ENCODE measurements at regions of chr3 and their contacts with region 1.

Region 1: DNA sequence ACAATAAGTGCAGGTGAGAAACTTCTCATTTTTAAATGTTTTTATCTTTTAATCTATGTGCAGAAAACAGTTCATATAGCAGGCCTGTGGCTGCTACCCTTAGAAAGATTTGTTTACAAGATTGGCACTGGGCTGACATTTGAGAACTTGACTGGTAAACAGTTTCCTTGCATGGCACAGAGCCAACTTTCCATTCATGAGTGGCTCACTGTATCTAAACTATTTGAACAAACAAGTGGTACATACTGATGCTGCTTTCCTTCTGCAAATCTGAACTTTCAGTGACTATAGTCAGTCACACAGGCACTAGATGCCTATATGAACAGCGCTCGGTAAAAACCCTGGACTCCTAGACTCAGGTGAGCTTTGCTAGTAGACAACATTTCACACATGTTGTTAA is 6.3 kb upstream of the GTPBP8 start:
- DNase-seq: no peak
- ATAC-seq: peak in 1 of 4 donors; percentile 20
- H3K4me3 ChIP-seq: no peak overlapping the region
- H3K27ac ChIP-seq: no peak overlapping the region
- H3K4me1 ChIP-seq: no peaks in the 10 kb centered on the region
- H3K27me3 ChIP-seq: no peaks in the 10 kb centered on the region
- CTCF ChIP-seq: no peak
- POLR2A ChIP-seq: no peak

Region 2: GRCh38 chr3:112642912-112643506 is 341.5 kb before region 1 on chr3:
- intact Hi-C with region 1: loop called (anchors 10 kb)
- DNase-seq: peak; percentile 72 to 78 (median 78)
- ATAC-seq: peak; percentile 94 to 96 (median 96)
- H3K4me3 ChIP-seq: no peak overlapping the region
- H3K27ac ChIP-seq: no peak overlapping the region
- H3K4me1 ChIP-seq: no peaks in the 10 kb centered on the region
- H3K27me3 ChIP-seq: no peaks in the 10 kb centered on the region
- CTCF ChIP-seq: peak; percentile 54 to 79 (median 71)
- POLR2A ChIP-seq: no peak

Region 3: GRCh38 chr3:112751564-112752512 is 232.6 kb before region 1 on chr3:
- intact Hi-C with region 1: no loop called
- DNase-seq: no peak
- ATAC-seq: no peak
- H3K4me3 ChIP-seq: no peak overlapping the region
- H3K27ac ChIP-seq: no peak overlapping the region
- H3K4me1 ChIP-seq: no peaks in the 10 kb centered on the region
- H3K27me3 ChIP-seq: no peaks in the 10 kb centered on the region
- CTCF ChIP-seq: no peak
- POLR2A ChIP-seq: no peak